ENCODE measurements at regions of chr14 and their contacts with region 1.

Region 1: GRCh38 chr14:31692376-31692781 is 131.2 kb downstream of the NUBPL start:
- DNase-seq: no peak
- ATAC-seq: no peak
- H3K4me3 ChIP-seq: no peak overlapping the region
- H3K27ac ChIP-seq: no peak overlapping the region
- H3K4me1 ChIP-seq: peaks cover 0 to 22% (median 5%) of the 10 kb centered on the region in 12 donors
- H3K27me3 ChIP-seq: no peaks in the 10 kb centered on the region
- CTCF ChIP-seq: no peak
- POLR2A ChIP-seq: no peak

Region 2: DNA sequence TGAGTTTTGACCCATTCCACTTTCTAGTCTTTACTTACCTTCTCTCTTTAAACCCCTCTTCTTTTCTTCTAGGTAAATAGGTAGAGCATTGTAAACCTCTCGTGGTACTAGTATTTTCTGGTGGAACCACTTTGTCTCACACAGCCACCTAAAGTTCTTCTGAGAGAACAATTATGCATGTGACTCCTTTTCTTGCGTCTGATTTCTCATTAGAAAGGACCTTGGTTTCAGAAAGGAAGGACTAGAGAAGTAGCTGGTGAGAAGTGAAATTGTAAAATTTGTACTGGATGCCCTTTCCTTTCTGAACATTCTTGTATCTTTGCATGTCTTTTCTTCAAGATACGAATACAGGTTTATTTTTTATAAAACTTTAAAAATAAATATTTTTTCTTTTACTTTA is 32.2 kb before region 1 on chr14:
- intact Hi-C with region 1: no loop called
- DNase-seq: no peak
- ATAC-seq: no peak
- H3K4me3 ChIP-seq: no peak overlapping the region
- H3K27ac ChIP-seq: no peak overlapping the region
- H3K4me1 ChIP-seq: no peaks in the 10 kb centered on the region
- H3K27me3 ChIP-seq: no peaks in the 10 kb centered on the region
- CTCF ChIP-seq: no peak
- POLR2A ChIP-seq: no peak

Region 3: GRCh38 chr14:31745741-31746140 is 53.4 kb after region 1 on chr14:
- intact Hi-C with region 1: loop called in 1 of 10 experiments (anchors 10 kb)
- DNase-seq: no peak
- ATAC-seq: no peak
- H3K4me3 ChIP-seq: no peak overlapping the region
- H3K27ac ChIP-seq: no peak overlapping the region
- H3K4me1 ChIP-seq: no peaks in the 10 kb centered on the region
- H3K27me3 ChIP-seq: no peaks in the 10 kb centered on the region
- CTCF ChIP-seq: no peak
- POLR2A ChIP-seq: no peak

Measured in heart left ventricle (tissue), 16 donors.